Mammary epithelial cell (primary cell): ENCODE measurements at regions of chr10 and their contacts with region 1.

Region 1: GRCh38 chr10:113854011-113854760 is at the starts of genes DCLRE1A and NHLRC2:
- DNase-seq: peak; percentile 78
- H3K4me3 ChIP-seq: peak within 1 kb of the TSS; percentile 90 to 95 (median 91)
- H3K27ac ChIP-seq: peak within 1 kb of the TSS; percentile 89
- H3K4me1 ChIP-seq: peaks cover 16% of the 10 kb centered on the region
- H3K27me3 ChIP-seq: no peaks in the 10 kb centered on the region
- CTCF ChIP-seq: no peak
- total RNA-seq, gene DCLRE1A: 6.5 TPM
- total RNA-seq, gene NHLRC2: 17.5 to 29.7 TPM

Region 2: DNA sequence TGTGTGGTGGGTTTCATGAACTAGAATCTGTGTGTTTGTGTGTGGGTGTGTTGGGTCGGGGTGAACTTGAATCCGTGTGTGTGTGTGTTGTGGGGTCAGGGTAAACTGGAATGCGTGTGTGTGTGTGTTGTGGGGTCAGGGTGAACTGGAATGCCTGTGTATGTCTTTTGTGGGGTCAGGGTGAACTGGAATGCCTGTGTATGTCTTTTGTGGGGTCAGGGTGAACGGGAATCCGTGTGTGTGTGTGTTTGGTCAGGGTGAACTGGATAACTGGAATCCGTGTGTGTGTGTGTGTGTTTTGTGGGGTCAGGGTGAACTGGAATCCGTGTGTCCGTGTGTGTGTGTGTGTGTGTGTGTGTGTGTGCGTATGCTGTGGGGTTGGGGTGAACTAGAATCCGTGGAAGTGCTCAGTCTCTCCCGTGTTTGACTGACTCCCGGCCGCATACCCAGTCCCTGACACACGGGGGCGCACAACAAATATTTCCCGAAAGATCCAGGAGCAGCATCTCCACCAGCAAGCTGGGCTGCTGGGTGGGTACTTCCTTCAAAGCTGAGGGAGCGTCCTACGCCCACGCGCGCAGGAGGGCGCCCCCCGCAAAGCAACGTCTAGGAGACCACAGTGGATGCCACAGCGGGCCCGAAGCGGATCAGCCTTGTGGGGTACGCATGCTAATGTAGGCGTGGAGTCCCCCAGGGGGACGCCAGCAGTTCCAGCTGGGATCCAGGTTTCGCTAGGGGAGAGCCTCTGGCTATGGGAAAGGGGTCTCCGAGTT is 175.3 kb before region 1 on chr10:
- CTCF ChIA-PET with region 1: no interaction called
- dilution Hi-C with region 1: no loop called
- in situ Hi-C with region 1: no loop called
- intact Hi-C with region 1: loop called (anchors 5 kb)
- DNase-seq: peak; percentile 72
- H3K4me3 ChIP-seq: peak overlapping the region; percentile 74 to 94 (median 94)
- H3K27ac ChIP-seq: peak overlapping the region; percentile 71
- H3K4me1 ChIP-seq: peaks cover 13% of the 10 kb centered on the region
- H3K27me3 ChIP-seq: no peaks in the 10 kb centered on the region
- CTCF ChIP-seq: peak; percentile 72 to 81